ENCODE measurements at regions of chr1 and their contacts with region 1.

Region 1: GRCh38 chr1:25616095-25616986 is at the start of gene MAN1C1:
- DNase-seq: peak; percentile 73
- ATAC-seq: peak; percentile 97
- H3K4me3 ChIP-seq: peak within 1 kb of the TSS; percentile 69
- H3K27ac ChIP-seq: peak within 1 kb of the TSS; percentile 12; the same call in 1 of the 2 replicates
- H3K4me1 ChIP-seq: peaks cover 7% of the 10 kb centered on the region; the same call in 1 of the 2 replicates
- H3K27me3 ChIP-seq: peaks cover 19% of the 10 kb centered on the region
- CTCF ChIP-seq: peak; percentile 35
- POLR2A ChIP-seq: no peak
- RAD21 ChIP-seq: no peak
- total RNA-seq, gene MAN1C1: 2.5 and 3.2 TPM in 2 replicates

Region 2: DNA sequence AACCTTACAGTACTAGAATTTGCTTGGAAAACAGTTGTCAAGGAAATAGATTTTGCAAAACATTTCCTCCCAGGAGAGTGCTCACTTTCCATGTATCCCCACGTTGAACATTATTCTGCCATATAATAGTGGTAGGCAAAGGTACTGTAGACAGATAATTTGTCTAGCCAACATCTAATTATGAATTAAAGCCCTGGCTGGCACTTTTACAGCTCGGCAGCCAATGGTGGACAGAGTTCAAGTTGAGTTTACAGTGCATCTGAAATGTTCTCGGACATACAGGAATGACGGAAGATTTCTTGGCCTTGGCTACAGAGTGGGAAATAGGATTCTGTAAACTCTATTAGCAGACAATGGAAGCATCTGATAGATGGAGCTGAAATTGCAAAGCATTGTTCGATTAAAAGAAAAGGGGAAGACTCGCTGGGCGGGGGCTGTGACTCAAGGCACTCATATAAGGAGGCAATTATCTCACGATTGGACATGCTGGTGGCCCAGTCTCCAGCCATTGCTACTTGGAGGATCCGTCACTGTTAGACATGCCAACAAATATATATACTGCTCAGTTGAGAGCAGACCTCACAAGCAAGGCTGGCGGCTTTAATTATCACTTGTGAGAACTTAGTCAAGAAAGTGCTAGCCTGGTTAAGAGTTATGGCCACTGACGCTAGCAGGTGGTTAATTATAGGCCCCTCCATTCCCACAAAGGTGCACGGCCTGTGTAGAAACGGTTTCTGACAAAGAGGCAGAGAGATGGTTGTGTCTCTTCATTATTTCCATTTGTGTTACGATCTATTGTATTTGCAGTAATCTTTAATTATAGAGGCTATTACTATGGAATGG is 48.2 kb after region 1 on chr1:
- CTCF ChIA-PET with region 1: no interaction called
- POLR2A ChIA-PET with region 1: no interaction called
- dilution Hi-C with region 1: no loop called
- in situ Hi-C with region 1: no loop called
- intact Hi-C with region 1: loop called (anchors 5 kb)
- DNase-seq: no peak
- ATAC-seq: no peak
- H3K4me3 ChIP-seq: no peak overlapping the region
- H3K27ac ChIP-seq: no peak overlapping the region
- H3K4me1 ChIP-seq: peaks cover 7% of the 10 kb centered on the region; the same call in 1 of the 2 replicates
- H3K27me3 ChIP-seq: no peaks in the 10 kb centered on the region
- CTCF ChIP-seq: no peak
- POLR2A ChIP-seq: no peak
- RAD21 ChIP-seq: no peak

Region 3: GRCh38 chr1:25695090-25695770 is 78.9 kb after region 1 on chr1:
- CTCF ChIA-PET with region 1: interaction called, 7 read pairs
- POLR2A ChIA-PET with region 1: no interaction called
- dilution Hi-C with region 1: no loop called
- in situ Hi-C with region 1: no loop called
- intact Hi-C with region 1: loop called (anchors 2 kb)
- DNase-seq: peak; percentile 99
- ATAC-seq: peak; percentile 78
- H3K4me3 ChIP-seq: no peak overlapping the region
- H3K27ac ChIP-seq: peak overlapping the region; percentile 96
- H3K4me1 ChIP-seq: peaks cover 32% of the 10 kb centered on the region
- H3K27me3 ChIP-seq: no peaks in the 10 kb centered on the region
- CTCF ChIP-seq: peak; percentile 51
- POLR2A ChIP-seq: no peak
- RAD21 ChIP-seq: peak; percentile 53

Region 4: GRCh38 chr1:25711555-25712298 is 95.4 kb after region 1 on chr1:
- CTCF ChIA-PET with region 1: interaction called, 4 read pairs
- POLR2A ChIA-PET with region 1: no interaction called
- dilution Hi-C with region 1: no loop called
- in situ Hi-C with region 1: no loop called
- intact Hi-C with region 1: loop called (anchors 1 kb)
- DNase-seq: peak; percentile 92
- ATAC-seq: peak; percentile 82
- H3K4me3 ChIP-seq: no peak overlapping the region
- H3K27ac ChIP-seq: peak overlapping the region; percentile 100
- H3K4me1 ChIP-seq: peaks cover 60% of the 10 kb centered on the region
- H3K27me3 ChIP-seq: no peaks in the 10 kb centered on the region
- CTCF ChIP-seq: no peak
- POLR2A ChIP-seq: no peak
- RAD21 ChIP-seq: peak; percentile 14; the same call in 1 of the 2 replicates

Region 5: DNA sequence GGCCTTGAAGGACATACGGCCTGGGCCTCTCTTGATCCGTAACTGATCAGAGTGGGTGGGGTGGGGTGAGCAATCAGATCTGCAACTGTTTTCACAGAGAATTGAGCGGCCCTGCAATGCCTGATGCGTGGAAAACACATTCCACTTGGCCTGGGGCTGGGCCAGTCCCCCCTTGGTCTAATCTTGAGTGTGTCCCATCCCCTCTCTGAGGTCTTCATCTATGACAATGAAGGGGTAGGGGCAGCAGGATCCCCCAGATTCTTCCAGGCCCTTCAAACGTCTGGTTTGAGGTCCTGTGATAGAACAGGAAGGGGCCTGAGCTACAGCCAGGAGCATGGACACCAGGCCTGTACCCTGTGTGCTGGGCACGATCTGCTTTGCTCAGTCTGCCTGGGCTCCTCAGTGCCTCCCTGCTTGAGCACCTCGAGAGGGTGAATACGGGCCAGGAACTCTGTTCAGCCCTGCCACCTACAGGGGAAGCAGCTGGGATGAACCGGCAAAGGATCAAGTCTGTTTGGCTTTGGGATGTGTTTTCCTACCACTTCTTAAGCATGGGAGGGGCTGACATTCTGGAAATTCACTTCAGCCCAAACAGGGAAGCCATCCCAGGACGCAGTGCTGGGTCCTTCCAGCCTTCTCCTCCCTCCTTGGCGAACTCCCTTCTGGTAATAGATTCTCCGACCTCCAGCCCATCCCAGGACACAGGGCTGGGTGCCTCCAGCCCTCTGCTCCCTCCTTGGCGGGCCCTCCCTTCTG is 127.7 kb after region 1 on chr1:
- CTCF ChIA-PET with region 1: no interaction called
- POLR2A ChIA-PET with region 1: no interaction called
- dilution Hi-C with region 1: no loop called
- in situ Hi-C with region 1: no loop called
- intact Hi-C with region 1: loop called (anchors 1 kb)
- DNase-seq: peak; percentile 53
- ATAC-seq: peak; percentile 92
- H3K4me3 ChIP-seq: no peak overlapping the region
- H3K27ac ChIP-seq: peak overlapping the region; percentile 4; the same call in 1 of the 2 replicates
- H3K4me1 ChIP-seq: peaks cover 8% of the 10 kb centered on the region; the same call in 1 of the 2 replicates
- H3K27me3 ChIP-seq: no peaks in the 10 kb centered on the region; the same call in 1 of the 2 replicates
- CTCF ChIP-seq: peak; percentile 61
- POLR2A ChIP-seq: no peak
- RAD21 ChIP-seq: peak; percentile 72

Region 6: GRCh38 chr1:25796811-25797458 is 180.6 kb after region 1 on chr1:
- CTCF ChIA-PET with region 1: interaction called, 3 read pairs
- POLR2A ChIA-PET with region 1: no interaction called
- dilution Hi-C with region 1: no loop called
- in situ Hi-C with region 1: loop called (anchors 5 kb)
- intact Hi-C with region 1: loop called (anchors 1 kb)
- DNase-seq: peak; percentile 77
- ATAC-seq: peak; percentile 27; the same call in 1 of the 2 replicates
- H3K4me3 ChIP-seq: no peak overlapping the region
- H3K27ac ChIP-seq: no peak overlapping the region
- H3K4me1 ChIP-seq: peaks cover 12% of the 10 kb centered on the region
- H3K27me3 ChIP-seq: no peaks in the 10 kb centered on the region
- CTCF ChIP-seq: peak; percentile 92
- POLR2A ChIP-seq: no peak
- RAD21 ChIP-seq: peak; percentile 90